IMR-90 (cell line): ENCODE measurements at regions of chr1 and their contacts with region 1.

Region 1: GRCh38 chr1:225603538-225604354 is 49.2 kb downstream of the ENAH start:
- DNase-seq: peak; percentile 75
- ATAC-seq: peak; percentile 70
- H3K4me3 ChIP-seq: no peak overlapping the region
- H3K27ac ChIP-seq: no peak overlapping the region
- H3K4me1 ChIP-seq: peaks cover 5% of the 10 kb centered on the region; the same call in 1 of the 2 replicates
- H3K27me3 ChIP-seq: no peaks in the 10 kb centered on the region
- CTCF ChIP-seq: no peak
- POLR2A ChIP-seq: no peak
- RAD21 ChIP-seq: no peak

Region 2: DNA sequence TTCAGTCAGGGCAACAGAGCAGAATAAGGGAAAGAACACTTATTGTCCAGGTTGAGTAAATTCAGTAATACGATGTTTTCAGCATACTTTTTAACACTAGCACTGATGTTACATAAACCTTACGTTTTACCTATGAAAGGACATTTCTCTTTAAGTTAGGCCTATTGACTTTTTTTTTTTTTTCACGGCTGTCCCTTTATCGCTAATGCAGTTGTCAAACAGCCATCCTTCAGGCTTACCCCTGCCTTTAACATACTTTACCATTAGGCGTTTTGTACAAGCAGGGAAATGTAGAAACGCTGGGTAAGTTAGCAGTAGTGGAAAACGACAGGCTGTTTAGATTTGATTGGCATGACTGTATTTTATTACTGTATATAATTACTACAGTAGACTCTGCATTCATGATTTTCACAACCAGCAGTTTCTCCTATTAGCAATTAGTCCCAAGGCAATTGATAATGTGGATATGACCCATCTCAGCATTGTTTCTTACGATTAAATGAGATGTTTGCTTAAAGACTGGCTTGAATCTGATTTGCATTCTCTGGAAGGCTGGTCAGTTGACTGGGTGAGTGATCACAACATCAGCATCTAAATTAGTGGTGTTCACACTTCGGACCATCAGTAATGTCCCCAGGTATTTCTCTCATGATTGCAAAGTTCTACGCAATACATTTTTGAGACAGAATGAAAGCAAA is 66.0 kb before region 1 on chr1:
- CTCF ChIA-PET with region 1: no interaction called
- POLR2A ChIA-PET with region 1: no interaction called
- dilution Hi-C with region 1: no loop called
- in situ Hi-C with region 1: no loop called
- intact Hi-C with region 1: loop called (anchors 2 kb)
- DNase-seq: no peak
- ATAC-seq: no peak
- H3K4me3 ChIP-seq: no peak overlapping the region
- H3K27ac ChIP-seq: no peak overlapping the region
- H3K4me1 ChIP-seq: peaks cover 10% of the 10 kb centered on the region
- H3K27me3 ChIP-seq: no peaks in the 10 kb centered on the region
- CTCF ChIP-seq: no peak
- POLR2A ChIP-seq: no peak
- RAD21 ChIP-seq: no peak

Region 3: DNA sequence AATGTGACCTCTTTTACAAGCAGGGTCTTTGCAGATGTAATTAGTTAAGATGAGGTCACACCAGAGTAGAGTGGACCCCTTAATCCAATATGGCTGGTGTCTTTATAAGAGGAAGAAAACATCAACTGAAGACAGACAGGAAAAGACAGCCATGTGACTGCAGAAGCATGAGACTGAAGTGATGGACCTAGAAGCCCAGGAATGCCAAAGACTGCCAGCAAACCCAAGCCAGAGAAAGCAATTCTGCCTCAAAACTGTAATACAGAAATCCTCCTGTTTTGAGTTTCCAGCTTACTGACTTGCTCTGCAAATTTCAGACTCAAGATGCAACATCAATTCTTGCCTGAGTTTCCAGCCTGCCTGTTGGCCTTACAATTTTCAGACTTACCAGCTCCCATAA is 31.9 kb after region 1 on chr1:
- CTCF ChIA-PET with region 1: no interaction called
- POLR2A ChIA-PET with region 1: no interaction called
- dilution Hi-C with region 1: no loop called
- in situ Hi-C with region 1: no loop called
- intact Hi-C with region 1: loop called (anchors 5 kb)
- DNase-seq: no peak
- ATAC-seq: peak; percentile 51
- H3K4me3 ChIP-seq: no peak overlapping the region
- H3K27ac ChIP-seq: no peak overlapping the region
- H3K4me1 ChIP-seq: peaks cover 3% of the 10 kb centered on the region
- H3K27me3 ChIP-seq: no peaks in the 10 kb centered on the region
- CTCF ChIP-seq: no peak
- POLR2A ChIP-seq: no peak
- RAD21 ChIP-seq: no peak

Region 4: GRCh38 chr1:226325178-226325577 is 721.4 kb after region 1 on chr1:
- CTCF ChIA-PET with region 1: no interaction called
- POLR2A ChIA-PET with region 1: no interaction called
- dilution Hi-C with region 1: no loop called
- in situ Hi-C with region 1: no loop called
- intact Hi-C with region 1: no loop called
- DNase-seq: no peak
- ATAC-seq: no peak
- H3K4me3 ChIP-seq: no peak overlapping the region
- H3K27ac ChIP-seq: no peak overlapping the region
- H3K4me1 ChIP-seq: no peaks in the 10 kb centered on the region
- H3K27me3 ChIP-seq: peaks cover 3% of the 10 kb centered on the region; the same call in 1 of the 2 replicates
- CTCF ChIP-seq: no peak
- POLR2A ChIP-seq: no peak
- RAD21 ChIP-seq: no peak